ENCODE measurements at regions of chr7 and their contacts with region 1.

Region 1: DNA sequence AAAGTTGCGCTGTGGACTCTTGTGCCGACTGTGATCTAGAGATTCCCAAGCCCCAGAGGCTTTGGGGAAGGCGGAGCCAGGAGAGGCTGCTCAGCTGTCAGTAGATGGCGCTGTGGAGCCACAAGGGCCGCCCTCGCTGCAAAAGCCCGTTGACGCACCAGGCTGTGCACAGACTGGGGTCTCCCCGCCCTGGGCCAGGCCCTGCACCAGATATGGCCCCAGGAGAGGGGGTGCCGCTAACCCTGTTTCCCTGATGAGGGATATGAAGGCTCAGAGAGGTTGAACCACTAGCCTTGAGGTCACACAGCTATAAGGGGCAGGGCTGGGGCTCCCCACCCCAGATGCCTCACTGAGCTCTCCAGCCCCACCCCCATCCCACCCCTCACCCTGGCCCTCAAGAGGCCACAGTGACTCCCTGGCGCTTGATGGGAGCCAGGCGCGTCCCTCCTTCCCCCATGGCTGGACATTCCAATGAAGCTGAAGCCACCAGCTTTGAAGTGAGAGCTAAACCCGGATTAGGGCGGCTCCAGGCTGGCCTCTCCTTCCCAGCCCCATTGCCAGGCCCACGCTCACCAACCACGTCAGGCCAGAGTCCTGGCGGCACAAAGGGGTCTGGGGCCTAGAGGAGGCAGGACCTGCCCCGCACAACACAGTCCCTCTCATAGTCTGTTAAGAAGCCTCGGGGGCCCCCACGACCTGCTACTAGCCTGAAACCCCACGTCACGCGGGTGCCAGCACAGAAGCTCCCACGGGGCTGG is 26.4 kb downstream of the MYL10 start:
- DNase-seq: peak; percentile 95
- ATAC-seq: peak; percentile 94
- H3K4me3 Mint-ChIP-seq: no peak overlapping the region
- H3K27ac Mint-ChIP-seq: 0 out of 2 replicates have a peak overlapping the region, but pooled peaks have one; percentile 41
- H3K4me1 Mint-ChIP-seq: no peaks in the 10 kb centered on the region
- H3K27me3 Mint-ChIP-seq: peaks cover 2% of the 10 kb centered on the region; the same call in 1 of the 2 replicates
- CTCF ChIP-seq: peak; percentile 82; the same call in 1 of the 2 replicates

Region 2: DNA sequence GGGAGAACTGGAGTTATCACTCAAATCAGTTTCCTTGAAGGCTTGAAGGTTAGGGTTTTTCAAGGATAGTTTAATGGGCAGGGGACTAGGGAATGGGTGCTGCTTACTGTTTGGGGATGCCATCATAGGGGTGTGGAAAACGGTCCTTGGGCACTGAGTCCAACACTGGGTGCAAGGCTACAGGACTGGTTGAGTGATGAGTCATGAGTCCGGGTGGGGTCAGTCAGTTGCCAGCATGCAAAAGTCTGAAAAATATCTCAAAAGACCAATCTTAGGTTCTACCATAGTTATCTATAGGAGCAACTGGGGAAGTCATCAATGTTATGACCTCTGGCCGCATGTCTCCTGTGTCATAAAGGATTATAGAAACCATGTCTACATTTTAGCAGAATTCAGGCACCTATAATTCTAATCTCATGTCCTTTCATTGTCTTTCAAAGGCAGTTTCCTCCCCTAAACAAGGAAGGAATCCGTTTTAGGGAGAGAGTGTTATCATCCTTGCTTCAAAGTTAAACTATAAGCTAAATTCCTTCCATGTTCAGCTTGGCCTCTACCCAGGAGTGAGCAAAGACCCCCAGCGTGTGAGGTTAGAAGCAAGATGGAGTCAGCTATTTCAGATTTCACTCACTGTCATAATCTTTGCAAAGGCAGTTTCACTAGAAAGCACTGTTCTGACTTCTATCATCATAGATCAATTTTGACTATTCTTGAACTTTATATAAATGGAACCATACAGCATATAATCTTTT is 145.5 kb before region 1 on chr7:
- CTCF ChIA-PET with region 1: no interaction called
- POLR2A ChIA-PET with region 1: no interaction called
- DNase-seq: no peak
- ATAC-seq: no peak
- H3K4me3 Mint-ChIP-seq: no peak overlapping the region
- H3K27ac Mint-ChIP-seq: peak overlapping the region; percentile 12; the same call in 1 of the 2 replicates
- H3K4me1 Mint-ChIP-seq: no peaks in the 10 kb centered on the region
- H3K27me3 Mint-ChIP-seq: no peaks in the 10 kb centered on the region
- CTCF ChIP-seq: no peak

Region 3: GRCh38 chr7:101586078-101586905 is 16.4 kb before region 1 on chr7:
- CTCF ChIA-PET with region 1: interaction called, 10 read pairs
- POLR2A ChIA-PET with region 1: no interaction called
- DNase-seq: no peak
- ATAC-seq: peak; percentile 52
- H3K4me3 Mint-ChIP-seq: no peak overlapping the region
- H3K27ac Mint-ChIP-seq: no peak overlapping the region
- H3K4me1 Mint-ChIP-seq: peaks cover 5% of the 10 kb centered on the region; the same call in 1 of the 2 replicates
- H3K27me3 Mint-ChIP-seq: peaks cover 21% of the 10 kb centered on the region
- CTCF ChIP-seq: no peak

Region 4: GRCh38 chr7:101614098-101614938 is 11.7 kb after region 1 on chr7:
- CTCF ChIA-PET with region 1: interaction called, 14 read pairs
- POLR2A ChIA-PET with region 1: no interaction called
- DNase-seq: no peak
- ATAC-seq: peak; percentile 13; the same call in 1 of the 2 replicates
- H3K4me3 Mint-ChIP-seq: no peak overlapping the region
- H3K27ac Mint-ChIP-seq: no peak overlapping the region
- H3K4me1 Mint-ChIP-seq: peaks cover 35% of the 10 kb centered on the region
- H3K27me3 Mint-ChIP-seq: no peaks in the 10 kb centered on the region
- CTCF ChIP-seq: no peak

Region 5: GRCh38 chr7:101625031-101625791 is 22.5 kb after region 1 on chr7:
- CTCF ChIA-PET with region 1: interaction called, 12 read pairs
- POLR2A ChIA-PET with region 1: interaction called, 4 read pairs
- DNase-seq: no peak
- ATAC-seq: peak; percentile 29
- H3K4me3 Mint-ChIP-seq: no peak overlapping the region
- H3K27ac Mint-ChIP-seq: no peak overlapping the region; the same call in 1 of the 2 replicates
- H3K4me1 Mint-ChIP-seq: peaks cover 21% of the 10 kb centered on the region
- H3K27me3 Mint-ChIP-seq: no peaks in the 10 kb centered on the region
- CTCF ChIP-seq: no peak